Psoas muscle (tissue), 8 donors: ENCODE measurements at regions of chr3 and their contacts with region 1.

Region 1: GRCh38 chr3:183298701-183299153 is 45.7 kb downstream of the B3GNT5 start:
- DNase-seq: peak; percentile 84 to 91
- ATAC-seq: peak; percentile 79 to 88 (median 83)
- H3K4me3 ChIP-seq: no peak overlapping the region
- H3K27ac ChIP-seq: peak overlapping the region; percentile 88
- H3K4me1 ChIP-seq: peaks cover 83% of the 10 kb centered on the region
- H3K27me3 ChIP-seq: no peaks in the 10 kb centered on the region
- CTCF ChIP-seq: no peak

Region 2: GRCh38 chr3:183635431-183636220 is 336.9 kb after region 1 on chr3 and contains the start of gene KLHL24:
- intact Hi-C with region 1: loop called in 1 of 2 experiments (anchors 10 kb)
- DNase-seq: peak; percentile 92 to 95
- ATAC-seq: peak; percentile 86 to 89 (median 87)
- H3K4me3 ChIP-seq: peak within 1 kb of the TSS; percentile 99
- H3K27ac ChIP-seq: peak within 1 kb of the TSS; percentile 100
- H3K4me1 ChIP-seq: peaks cover 38% of the 10 kb centered on the region
- H3K27me3 ChIP-seq: no peaks in the 10 kb centered on the region
- CTCF ChIP-seq: peak; percentile 4
- total RNA-seq, gene KLHL24: 77.8 to 162 (median 123) TPM

Region 3: DNA sequence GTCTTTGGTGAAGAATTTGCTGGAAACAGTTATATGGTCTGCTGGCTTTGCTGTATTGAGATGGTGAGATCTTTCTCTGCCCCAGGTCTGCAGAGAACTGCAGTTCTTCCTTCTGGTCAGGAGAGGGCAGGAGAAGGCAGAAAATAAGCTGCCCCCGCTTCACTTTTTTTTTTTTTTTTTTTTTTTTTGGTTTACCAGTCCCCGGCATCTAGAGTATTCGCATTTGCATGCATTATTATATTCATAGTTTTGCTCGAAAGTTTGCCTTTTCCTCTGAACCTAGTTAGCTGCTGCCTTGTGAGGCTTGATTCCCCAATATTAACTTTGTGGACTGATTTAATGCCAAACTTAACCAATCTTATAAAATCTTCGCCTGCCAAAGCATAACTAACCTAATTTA is 596.6 kb after region 1 on chr3:
- intact Hi-C with region 1: no loop called
- DNase-seq: no peak
- ATAC-seq: peak; percentile 77 to 93 (median 86)
- H3K4me3 ChIP-seq: no peak overlapping the region
- H3K27ac ChIP-seq: no peak overlapping the region
- H3K4me1 ChIP-seq: no peaks in the 10 kb centered on the region
- H3K27me3 ChIP-seq: no peaks in the 10 kb centered on the region
- CTCF ChIP-seq: peak; percentile 86